ENCODE measurements at regions of chr2 and their contacts with region 1.

Region 1: GRCh38 chr2:54503192-54503591 is 47.1 kb downstream of the SPTBN1 start:
- DNase-seq: no peak
- ATAC-seq: peak; percentile 82
- H3K4me3 ChIP-seq: no peak overlapping the region
- H3K27ac ChIP-seq: no peak overlapping the region
- H3K4me1 ChIP-seq: no peaks in the 10 kb centered on the region
- H3K27me3 ChIP-seq: no peaks in the 10 kb centered on the region
- CTCF ChIP-seq: peak; percentile 67 to 83 (median 75)
- POLR2A ChIP-seq: no peak
- RAD21 ChIP-seq: peak; percentile 86

Region 2: GRCh38 chr2:54161660-54162424 is 341.4 kb before region 1 on chr2:
- CTCF ChIA-PET with region 1: interaction called, 7 read pairs
- POLR2A ChIA-PET with region 1: no interaction called
- RAD21 ChIA-PET with region 1: no interaction called
- intact Hi-C with region 1: loop called (anchors 5 kb)
- DNase-seq: no peak
- ATAC-seq: no peak
- H3K4me3 ChIP-seq: no peak overlapping the region
- H3K27ac ChIP-seq: no peak overlapping the region
- H3K4me1 ChIP-seq: no peaks in the 10 kb centered on the region
- H3K27me3 ChIP-seq: no peaks in the 10 kb centered on the region
- CTCF ChIP-seq: peak in 1 of 3 experiments; percentile 12; a peak in 1 of 6 replicates
- POLR2A ChIP-seq: no peak
- RAD21 ChIP-seq: no peak

Region 3: GRCh38 chr2:54206596-54206995 is 296.6 kb before region 1 on chr2:
- CTCF ChIA-PET with region 1: interaction called, 5 read pairs
- POLR2A ChIA-PET with region 1: no interaction called
- RAD21 ChIA-PET with region 1: no interaction called
- intact Hi-C with region 1: loop called (anchors 1 kb)
- DNase-seq: peak; percentile 37
- ATAC-seq: peak; percentile 73
- H3K4me3 ChIP-seq: no peak overlapping the region
- H3K27ac ChIP-seq: no peak overlapping the region
- H3K4me1 ChIP-seq: no peaks in the 10 kb centered on the region
- H3K27me3 ChIP-seq: no peaks in the 10 kb centered on the region
- CTCF ChIP-seq: peak; percentile 54 to 69 (median 64); a peak in 5 of 6 replicates
- POLR2A ChIP-seq: no peak
- RAD21 ChIP-seq: peak; percentile 65

Region 4: GRCh38 chr2:54341656-54342055 is 161.5 kb before region 1 on chr2:
- CTCF ChIA-PET with region 1: no interaction called
- POLR2A ChIA-PET with region 1: no interaction called
- RAD21 ChIA-PET with region 1: no interaction called
- intact Hi-C with region 1: loop called (anchors 5 kb)
- DNase-seq: no peak
- ATAC-seq: peak; percentile 38; the same call in 1 of the 2 replicates
- H3K4me3 ChIP-seq: no peak overlapping the region
- H3K27ac ChIP-seq: no peak overlapping the region
- H3K4me1 ChIP-seq: no peaks in the 10 kb centered on the region
- H3K27me3 ChIP-seq: no peaks in the 10 kb centered on the region
- CTCF ChIP-seq: peak in 1 of 3 experiments; percentile 29; a peak in 2 of 6 replicates
- POLR2A ChIP-seq: no peak
- RAD21 ChIP-seq: peak; percentile 23; the same call in 1 of the 2 replicates